Activated T-helper 1 cell treated with anti-CD3 and anti-CD28 coated beads, Interleukin-12 subunit alpha, Interleukin-12 subunit beta, Interleukin-2, Interleukin-4 antibody, amounts not matched to agents 30 ng/mL and 10 ng/mL and 1 ng/mL, durations not matched to agents 14 hours and 24 hours and 36 hours (primary cell): ENCODE measurements at regions of chr7 and their contacts with region 1.

Region 1: DNA sequence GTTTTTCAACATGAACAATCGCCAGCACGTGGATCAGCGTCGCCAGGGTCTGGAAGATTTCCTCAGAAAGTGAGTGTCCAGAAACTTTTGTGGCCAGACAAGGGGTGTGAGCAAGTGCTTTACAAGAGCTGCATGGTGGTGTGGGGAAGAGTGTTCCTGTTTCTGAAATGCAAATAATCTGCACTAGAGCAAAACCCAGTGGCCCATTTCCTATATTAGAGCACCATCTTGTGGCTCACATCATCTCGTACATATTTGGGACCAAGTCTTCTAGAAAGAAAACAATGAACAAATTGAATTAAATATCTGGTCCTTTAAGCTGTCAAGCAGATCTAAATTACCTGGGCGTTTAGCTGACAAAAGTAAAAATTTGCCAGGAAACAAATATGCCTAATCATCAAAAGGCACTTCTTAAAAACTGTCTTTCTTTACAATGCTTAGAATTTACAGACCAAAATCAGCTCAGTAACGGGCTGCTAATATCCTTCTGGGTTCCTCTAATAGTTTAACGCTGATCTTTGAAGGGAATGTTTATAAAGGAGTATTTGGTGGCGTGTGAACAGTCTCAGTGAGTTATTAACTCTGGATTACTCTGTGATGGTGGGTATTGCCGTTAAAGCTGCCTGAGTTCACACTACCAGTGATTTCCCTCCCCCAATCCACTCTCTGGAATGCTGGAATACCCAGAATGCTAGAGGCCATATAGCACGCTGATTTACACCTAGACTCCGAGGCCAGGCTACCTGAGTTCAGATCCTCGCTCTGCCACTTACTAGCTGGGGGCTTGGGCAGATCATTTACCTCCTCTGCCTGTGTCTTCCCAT is 73.6 kb downstream of the SNX10 start:
- DNase-seq: peak; percentile 46
- H3K4me3 Mint-ChIP-seq: no peak overlapping the region
- H3K27ac Mint-ChIP-seq: peak overlapping the region; percentile 37
- H3K4me1 Mint-ChIP-seq: peaks cover 14% of the 10 kb centered on the region
- H3K27me3 Mint-ChIP-seq: no peaks in the 10 kb centered on the region

Region 2: GRCh38 chr7:25158966-25159365 is 1206.3 kb before region 1 on chr7:
- intact Hi-C with region 1: no loop called
- DNase-seq: no peak
- H3K4me3 Mint-ChIP-seq: no peak overlapping the region
- H3K27ac Mint-ChIP-seq: no peak overlapping the region
- H3K4me1 Mint-ChIP-seq: no peaks in the 10 kb centered on the region
- H3K27me3 Mint-ChIP-seq: no peaks in the 10 kb centered on the region

Region 3: DNA sequence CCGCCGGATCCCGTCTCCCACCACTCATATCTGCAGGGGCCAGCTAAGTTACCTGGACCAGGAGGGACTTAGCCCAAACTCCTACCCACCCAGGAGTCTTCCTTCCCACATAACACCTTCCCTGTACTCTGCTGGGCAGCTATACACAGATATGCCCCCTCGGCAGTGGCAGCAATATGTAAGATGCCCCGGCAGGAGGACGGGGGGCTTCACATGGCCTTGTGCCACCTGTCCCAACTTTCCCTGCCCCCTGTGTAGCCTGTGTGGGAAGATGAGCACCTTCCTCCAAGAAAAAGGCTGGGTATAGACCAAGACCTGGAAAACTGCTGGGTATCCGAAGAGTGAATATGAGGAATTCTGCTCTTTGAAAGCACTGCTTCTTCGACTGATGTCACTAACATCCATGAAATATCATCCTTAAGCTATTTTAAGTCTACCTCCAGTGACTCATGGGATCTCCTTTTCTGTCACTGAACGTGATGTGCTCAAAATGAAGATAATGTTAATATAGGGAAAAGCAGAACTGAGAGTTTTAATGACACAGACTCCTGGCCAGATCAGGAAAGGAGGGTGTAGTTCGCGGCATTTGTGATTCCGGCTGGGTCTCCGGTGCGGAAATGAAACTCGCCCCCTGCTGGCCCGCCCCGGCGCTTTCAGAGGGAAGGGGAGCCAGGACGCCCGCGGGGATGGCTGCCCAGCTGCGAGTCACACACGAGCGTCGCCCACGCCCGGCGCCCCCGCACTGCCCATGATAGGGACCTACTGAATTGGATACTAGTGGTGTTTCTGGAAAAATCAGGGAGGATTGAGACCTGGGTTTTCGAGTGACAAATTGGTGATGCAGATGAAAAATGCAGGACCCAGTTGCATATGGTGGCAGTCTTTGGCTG is 470.1 kb before region 1 on chr7:
- intact Hi-C with region 1: loop called (anchors 1 kb)
- DNase-seq: peak; percentile 51
- H3K4me3 Mint-ChIP-seq: peak overlapping the region; percentile 3
- H3K27ac Mint-ChIP-seq: no peak overlapping the region
- H3K4me1 Mint-ChIP-seq: peaks cover 33% of the 10 kb centered on the region
- H3K27me3 Mint-ChIP-seq: peaks cover 6% of the 10 kb centered on the region

Region 4: GRCh38 chr7:26090927-26091519 is 274.3 kb before region 1 on chr7:
- intact Hi-C with region 1: loop called (anchors 1 kb)
- DNase-seq: no peak
- H3K4me3 Mint-ChIP-seq: no peak overlapping the region
- H3K27ac Mint-ChIP-seq: peak overlapping the region; percentile 6
- H3K4me1 Mint-ChIP-seq: peaks cover 22% of the 10 kb centered on the region
- H3K27me3 Mint-ChIP-seq: no peaks in the 10 kb centered on the region

Region 5: DNA sequence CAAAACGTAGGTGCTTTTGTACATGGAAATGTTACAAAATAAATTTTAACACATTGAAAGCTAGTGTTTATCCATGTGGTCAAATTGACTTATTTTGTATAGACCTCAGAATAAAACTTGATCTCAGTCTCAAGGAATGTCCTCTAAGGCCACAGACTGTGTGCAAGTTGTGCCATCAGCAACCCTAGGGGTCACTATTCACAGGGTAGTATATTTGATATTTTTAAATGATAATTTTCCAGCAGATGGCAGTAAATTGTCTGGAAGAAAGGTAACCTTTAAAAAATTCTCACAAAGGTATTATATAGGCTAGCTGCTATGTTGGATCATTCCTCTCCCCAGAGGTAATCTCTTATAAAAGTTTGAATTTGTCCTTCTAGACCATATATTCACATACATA is 86.5 kb before region 1 on chr7:
- intact Hi-C with region 1: loop called (anchors 1 kb)
- DNase-seq: no peak
- H3K4me3 Mint-ChIP-seq: peak overlapping the region; percentile 47
- H3K27ac Mint-ChIP-seq: no peak overlapping the region
- H3K4me1 Mint-ChIP-seq: peaks cover 22% of the 10 kb centered on the region
- H3K27me3 Mint-ChIP-seq: peaks cover 3% of the 10 kb centered on the region

Region 6: GRCh38 chr7:26398756-26399501 is 33.6 kb after region 1 on chr7:
- intact Hi-C with region 1: loop called (anchors 2 kb)
- DNase-seq: peak; percentile 8
- H3K4me3 Mint-ChIP-seq: peak overlapping the region; percentile 92
- H3K27ac Mint-ChIP-seq: peak overlapping the region; percentile 89
- H3K4me1 Mint-ChIP-seq: peaks cover 13% of the 10 kb centered on the region
- H3K27me3 Mint-ChIP-seq: peaks cover 54% of the 10 kb centered on the region

Region 7: DNA sequence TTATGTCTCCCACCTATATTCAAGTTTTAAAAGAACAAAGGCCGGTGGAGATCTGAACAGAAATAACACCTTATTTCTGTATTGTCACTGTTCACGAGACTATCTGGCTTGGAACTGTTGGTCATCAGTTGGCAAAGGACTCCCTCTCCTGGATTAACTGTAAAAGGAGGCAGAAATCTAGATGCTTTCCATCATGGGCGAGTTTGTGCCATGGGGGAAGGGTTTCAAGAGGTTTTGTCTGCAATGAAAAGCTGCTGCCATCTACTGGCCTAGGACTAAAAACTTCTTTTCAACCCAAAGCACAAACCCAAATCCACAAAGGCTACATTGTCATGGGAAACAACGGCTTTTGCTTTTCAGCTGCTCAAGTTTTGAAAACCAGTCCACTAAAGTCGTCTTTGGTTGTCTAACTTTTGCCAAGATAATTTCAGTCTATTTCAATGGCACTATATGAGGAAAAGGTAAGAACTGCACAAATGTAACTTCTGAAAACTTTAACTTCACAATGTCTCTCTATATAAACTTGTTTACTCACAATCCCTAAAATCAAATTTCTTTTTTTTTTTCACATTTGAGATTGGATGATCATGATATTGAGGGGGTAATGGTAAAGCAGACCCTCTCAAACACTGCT is 302.3 kb after region 1 on chr7:
- intact Hi-C with region 1: loop called (anchors 1 kb)
- DNase-seq: peak; percentile 47
- H3K4me3 Mint-ChIP-seq: no peak overlapping the region
- H3K27ac Mint-ChIP-seq: no peak overlapping the region
- H3K4me1 Mint-ChIP-seq: peaks cover 16% of the 10 kb centered on the region
- H3K27me3 Mint-ChIP-seq: peaks cover 39% of the 10 kb centered on the region